GM13976 (cell line): ENCODE measurements at regions of chr10 and their contacts with region 1.

Region 1: GRCh38 chr10:128150045-128150493 is 23.8 kb upstream of the MKI67 start:
- DNase-seq: peak; percentile 93
- CTCF ChIP-seq: peak; percentile 100

Region 2: GRCh38 chr10:128078136-128078969 is 71.7 kb before region 1 on chr10:
- in situ Hi-C with region 1: loop called (anchors 5 kb)
- DNase-seq: peak; percentile 78
- CTCF ChIP-seq: peak; percentile 82